Activated CD4-positive, alpha-beta memory T cell treated with anti-CD3 and anti-CD28 coated beads, Interleukin-2, amount 10 ng/mL, durations not matched to agents 7 days and 5 days (primary cell): ENCODE measurements at regions of chr14 and their contacts with region 1.

Region 1: DNA sequence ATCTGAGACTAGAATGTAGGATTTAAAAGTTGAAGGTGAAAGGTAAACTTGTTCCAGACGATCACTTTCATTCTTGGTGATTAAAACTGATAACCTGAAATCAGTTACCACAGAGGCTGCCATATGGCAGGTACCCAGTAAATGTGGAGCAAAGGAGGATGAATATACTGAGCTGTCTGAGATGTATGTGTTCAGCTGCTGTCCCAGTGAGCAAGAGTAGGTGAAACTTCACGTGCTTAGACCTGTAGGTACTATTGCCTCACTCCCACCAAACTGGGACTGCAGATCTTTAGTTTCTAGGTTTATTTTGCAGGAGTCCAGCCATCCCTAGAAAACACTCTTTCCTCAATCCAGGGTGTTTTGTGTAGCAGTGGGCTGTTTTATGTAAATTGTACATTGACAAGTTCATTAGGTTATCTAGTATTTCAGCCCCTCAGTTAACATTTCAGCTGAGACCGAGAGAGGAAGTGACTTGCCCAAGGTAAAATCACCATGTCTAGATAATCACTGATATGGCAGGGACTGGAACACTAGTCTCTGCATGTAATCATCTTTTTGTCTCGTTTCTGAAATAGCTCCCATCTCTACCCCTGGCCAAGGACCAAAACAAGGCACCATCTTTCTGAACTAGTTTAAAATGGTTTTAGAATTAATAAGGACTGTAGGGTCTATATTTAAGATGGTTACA is 62.7 kb downstream of the ATG14 start:
- DNase-seq: no peak
- H3K4me3 Mint-ChIP-seq: peak overlapping the region; percentile 2
- H3K27ac Mint-ChIP-seq: no peak overlapping the region
- H3K4me1 Mint-ChIP-seq: peaks cover 38% of the 10 kb centered on the region
- H3K27me3 Mint-ChIP-seq: no peaks in the 10 kb centered on the region

Region 2: DNA sequence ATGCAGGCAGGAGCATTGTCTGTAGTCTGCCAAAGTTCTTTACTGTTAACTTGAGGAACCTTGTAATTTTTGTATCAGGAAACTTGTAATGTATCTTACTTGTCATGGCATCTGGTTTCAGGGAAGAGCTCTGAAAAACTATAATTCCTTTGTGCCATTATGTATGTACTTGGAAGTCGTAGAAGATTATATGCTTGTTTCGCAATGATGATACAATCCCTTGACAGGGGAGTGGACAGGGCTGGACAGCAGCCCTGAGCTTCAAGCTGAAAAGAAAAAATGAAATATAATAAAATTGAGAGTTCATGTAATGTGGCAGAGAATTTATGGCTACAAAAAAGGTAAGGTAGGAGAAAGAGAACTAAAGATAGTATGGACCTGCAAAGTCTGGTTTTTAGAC is 150.2 kb before region 1 on chr14:
- CTCF ChIA-PET with region 1: no interaction called
- POLR2A ChIA-PET with region 1: no interaction called
- DNase-seq: no peak
- H3K4me3 Mint-ChIP-seq: no peak overlapping the region
- H3K27ac Mint-ChIP-seq: no peak overlapping the region
- H3K4me1 Mint-ChIP-seq: no peaks in the 10 kb centered on the region
- H3K27me3 Mint-ChIP-seq: peaks cover 11% of the 10 kb centered on the region

Region 3: GRCh38 chr14:55333711-55334485 is 15.0 kb before region 1 on chr14:
- CTCF ChIA-PET with region 1: interaction called, 27 read pairs
- POLR2A ChIA-PET with region 1: interaction called, 27 read pairs
- DNase-seq: no peak
- H3K4me3 Mint-ChIP-seq: peak overlapping the region; percentile 76
- H3K27ac Mint-ChIP-seq: peak overlapping the region; percentile 88
- H3K4me1 Mint-ChIP-seq: peaks cover 81% of the 10 kb centered on the region
- H3K27me3 Mint-ChIP-seq: no peaks in the 10 kb centered on the region

Region 4: DNA sequence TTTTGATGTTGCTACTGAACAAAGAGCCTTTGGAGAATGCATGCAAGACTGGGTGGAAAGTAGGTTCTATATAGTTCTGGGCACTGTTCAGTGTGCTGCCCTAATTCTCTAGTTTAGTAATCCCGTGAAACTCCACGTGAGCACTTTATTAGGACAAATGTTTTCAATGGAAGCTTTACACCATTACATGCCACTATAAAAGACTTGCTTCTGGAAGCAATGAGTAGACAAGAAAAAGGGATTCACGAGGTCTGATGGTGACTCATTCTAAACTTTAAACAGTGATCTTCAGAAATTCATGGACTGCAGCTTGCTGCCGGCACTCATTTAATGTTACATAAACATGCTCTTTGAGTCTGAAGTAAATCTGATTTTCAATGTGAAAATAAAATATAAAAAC is 40.4 kb after region 1 on chr14:
- CTCF ChIA-PET with region 1: no interaction called
- POLR2A ChIA-PET with region 1: no interaction called
- DNase-seq: no peak
- H3K4me3 Mint-ChIP-seq: no peak overlapping the region
- H3K27ac Mint-ChIP-seq: no peak overlapping the region
- H3K4me1 Mint-ChIP-seq: peaks cover 35% of the 10 kb centered on the region
- H3K27me3 Mint-ChIP-seq: no peaks in the 10 kb centered on the region